ENCODE measurements at regions of chr7 and their contacts with region 1.

Region 1: DNA sequence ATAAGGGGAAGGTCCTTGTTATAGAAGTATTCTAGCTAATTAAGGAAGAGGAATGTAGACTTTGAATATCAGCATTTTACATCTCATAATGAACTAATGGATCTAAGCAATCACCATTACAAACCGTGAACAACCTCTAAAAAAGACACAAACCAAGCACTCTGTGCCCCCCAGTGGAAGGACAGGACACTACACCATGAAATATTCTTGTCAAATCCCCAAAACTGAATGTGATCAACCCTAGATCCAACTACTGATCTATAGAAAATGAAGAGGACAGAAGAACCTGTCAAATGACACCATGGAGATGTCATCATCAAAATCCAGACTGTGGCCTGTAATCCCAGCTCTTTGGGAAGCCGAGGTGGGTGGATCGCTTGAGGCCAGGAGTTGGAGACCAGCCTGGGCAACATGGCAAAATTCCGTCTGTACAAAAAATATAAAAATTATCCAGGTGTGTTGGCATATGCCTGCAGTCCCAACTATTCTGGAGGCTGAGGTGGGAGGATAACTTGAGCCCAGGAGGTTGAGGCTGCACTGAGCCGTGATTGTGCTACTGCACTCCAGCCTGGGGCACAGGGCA is 111.3 kb upstream of the CARD11 start:
- DNase-seq: peak; percentile 69
- H3K4me3 Mint-ChIP-seq: no peak overlapping the region
- H3K27ac Mint-ChIP-seq: no peak overlapping the region
- H3K4me1 Mint-ChIP-seq: peaks cover 22% of the 10 kb centered on the region
- H3K27me3 Mint-ChIP-seq: no peaks in the 10 kb centered on the region
- CTCF ChIP-seq: peak; percentile 88

Region 2: DNA sequence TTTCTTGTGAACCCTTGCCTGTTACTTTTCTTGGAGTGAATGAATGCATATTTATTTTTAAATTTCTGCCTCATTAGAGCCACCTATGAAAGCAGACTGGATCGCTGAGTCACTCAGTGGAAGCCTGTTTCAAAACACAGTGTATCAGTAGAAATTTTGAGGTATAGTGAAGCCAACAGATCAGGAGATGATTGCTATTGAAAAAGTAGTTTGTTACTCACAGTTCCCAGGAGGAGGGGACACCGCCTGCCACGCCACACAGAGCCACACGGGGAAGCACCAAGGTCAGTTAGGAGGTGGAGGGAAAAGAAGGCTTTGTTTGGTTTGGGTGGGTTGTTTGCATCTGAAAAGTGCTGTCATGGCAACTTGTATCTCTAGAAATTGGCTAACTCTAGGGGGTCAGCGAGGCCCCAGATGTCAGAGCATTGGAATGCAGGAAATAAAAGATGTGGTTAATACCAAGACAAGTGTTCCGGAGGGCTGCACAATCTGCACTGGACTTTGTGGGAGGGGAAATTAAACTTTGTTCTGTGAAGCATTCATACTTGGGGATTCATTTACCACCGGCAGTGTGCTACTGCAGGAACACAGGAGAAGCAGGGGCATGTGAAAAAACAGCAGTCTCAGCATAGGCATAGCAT is 39.6 kb after region 1 on chr7:
- CTCF ChIA-PET with region 1: no interaction called
- intact Hi-C with region 1: loop called (anchors 5 kb)
- DNase-seq: peak; percentile 95
- H3K4me3 Mint-ChIP-seq: peak overlapping the region; percentile 35
- H3K27ac Mint-ChIP-seq: peak overlapping the region; percentile 83
- H3K4me1 Mint-ChIP-seq: peaks cover 69% of the 10 kb centered on the region
- H3K27me3 Mint-ChIP-seq: no peaks in the 10 kb centered on the region
- CTCF ChIP-seq: peak; percentile 87

Measured in Calu3 (cell line).